MCF 10A (cell line): ENCODE measurements at regions of chr1 and their contacts with region 1.

Region 1: GRCh38 chr1:90721210-90722194 is 4.4 kb upstream of the BARHL2 start:
- DNase-seq: peak; percentile 78
- H3K4me3 Mint-ChIP-seq: peak overlapping the region; percentile 11
- H3K27ac Mint-ChIP-seq: no peak overlapping the region
- H3K4me1 Mint-ChIP-seq: no peaks in the 10 kb centered on the region
- H3K27me3 Mint-ChIP-seq: peaks cover 3% of the 10 kb centered on the region
- CTCF ChIP-seq: peak; percentile 79

Region 2: GRCh38 chr1:90133133-90133532 is 588.4 kb before region 1 on chr1:
- CTCF ChIA-PET with region 1: no interaction called
- POLR2A ChIA-PET with region 1: no interaction called
- intact Hi-C with region 1: loop called (anchors 1 kb)
- DNase-seq: peak; percentile 77
- H3K4me3 Mint-ChIP-seq: no peak overlapping the region
- H3K27ac Mint-ChIP-seq: no peak overlapping the region
- H3K4me1 Mint-ChIP-seq: no peaks in the 10 kb centered on the region
- H3K27me3 Mint-ChIP-seq: peaks cover 18% of the 10 kb centered on the region
- CTCF ChIP-seq: peak; percentile 74

Region 3: GRCh38 chr1:90850898-90851710 is 129.6 kb after region 1 on chr1:
- CTCF ChIA-PET with region 1: interaction called, 10 read pairs
- POLR2A ChIA-PET with region 1: no interaction called
- intact Hi-C with region 1: loop called (anchors 1 kb)
- DNase-seq: peak; percentile 70
- H3K4me3 Mint-ChIP-seq: peak overlapping the region; percentile 65
- H3K27ac Mint-ChIP-seq: no peak overlapping the region
- H3K4me1 Mint-ChIP-seq: no peaks in the 10 kb centered on the region
- H3K27me3 Mint-ChIP-seq: no peaks in the 10 kb centered on the region
- CTCF ChIP-seq: peak; percentile 70

Region 4: DNA sequence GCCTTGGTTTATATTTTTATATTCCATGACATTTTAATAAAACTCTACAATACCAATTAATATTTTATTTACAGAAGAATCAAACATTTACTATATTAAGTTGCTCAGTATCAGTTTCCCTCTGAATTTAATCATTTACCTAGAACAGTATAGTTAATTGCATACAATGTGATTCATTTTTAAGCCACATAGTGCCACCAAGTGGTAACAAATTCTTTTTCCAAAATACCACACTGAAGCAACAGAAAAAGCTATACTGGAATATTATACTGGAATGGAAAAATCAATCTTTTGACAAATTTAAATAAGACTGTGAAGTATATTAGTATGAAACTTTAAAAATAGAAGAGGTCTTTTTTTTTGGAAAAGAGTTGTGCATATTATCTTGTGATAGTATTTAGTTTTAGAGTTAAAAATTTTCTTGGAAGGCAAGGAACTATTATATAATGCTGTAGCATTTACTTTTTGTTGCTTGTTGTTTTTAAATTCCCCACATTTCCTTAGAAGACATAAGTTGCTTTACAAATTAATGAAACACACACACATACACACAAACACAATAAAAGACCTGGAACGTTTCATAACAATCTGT is 243.0 kb after region 1 on chr1:
- CTCF ChIA-PET with region 1: interaction called, 8 read pairs
- POLR2A ChIA-PET with region 1: no interaction called
- intact Hi-C with region 1: loop called (anchors 1 kb)
- DNase-seq: peak; percentile 33
- H3K4me3 Mint-ChIP-seq: no peak overlapping the region
- H3K27ac Mint-ChIP-seq: no peak overlapping the region
- H3K4me1 Mint-ChIP-seq: peaks cover 33% of the 10 kb centered on the region
- H3K27me3 Mint-ChIP-seq: no peaks in the 10 kb centered on the region
- CTCF ChIP-seq: peak; percentile 49

Region 5: GRCh38 chr1:91282695-91283420 is 561.4 kb after region 1 on chr1:
- CTCF ChIA-PET with region 1: interaction called, 3 read pairs
- POLR2A ChIA-PET with region 1: no interaction called
- intact Hi-C with region 1: loop called (anchors 5 kb)
- DNase-seq: peak; percentile 75
- H3K4me3 Mint-ChIP-seq: no peak overlapping the region
- H3K27ac Mint-ChIP-seq: no peak overlapping the region
- H3K4me1 Mint-ChIP-seq: no peaks in the 10 kb centered on the region
- H3K27me3 Mint-ChIP-seq: peaks cover 31% of the 10 kb centered on the region
- CTCF ChIP-seq: peak; percentile 69